ENCODE measurements at regions of chr4 and their contacts with region 1.

Region 1: GRCh38 chr4:54058171-54058570 is 6.2 kb downstream of the CHIC2 start:
- DNase-seq: peak in 2 of 9 experiments; percentile 20 to 49
- ATAC-seq: peak; percentile 44
- H3K4me3 ChIP-seq: no peak overlapping the region
- H3K4me3 Mint-ChIP-seq: peak overlapping the region; percentile 59
- H3K27ac ChIP-seq: no peak overlapping the region
- H3K27ac Mint-ChIP-seq: no peak overlapping the region
- H3K4me1 ChIP-seq: peaks cover 64% of the 10 kb centered on the region
- H3K4me1 Mint-ChIP-seq: peaks cover 81% of the 10 kb centered on the region
- H3K27me3 ChIP-seq: no peaks in the 10 kb centered on the region
- H3K27me3 Mint-ChIP-seq: no peaks in the 10 kb centered on the region
- CTCF ChIP-seq: no peak

Region 2: GRCh38 chr4:53371049-53371448 is 687.1 kb before region 1 on chr4:
- CTCF ChIA-PET with region 1: no interaction called
- POLR2A ChIA-PET with region 1: no interaction called
- intact Hi-C with region 1: loop called (anchors 2 to 5 kb)
- DNase-seq: no peak
- ATAC-seq: no peak
- H3K4me3 ChIP-seq: no peak overlapping the region
- H3K4me3 Mint-ChIP-seq: no peak overlapping the region
- H3K27ac ChIP-seq: no peak overlapping the region
- H3K27ac Mint-ChIP-seq: no peak overlapping the region
- H3K4me1 ChIP-seq: peaks cover 7% of the 10 kb centered on the region
- H3K4me1 Mint-ChIP-seq: peaks cover 12% of the 10 kb centered on the region
- H3K27me3 ChIP-seq: peaks cover 0 to 9% of the 10 kb centered on the region in 2 experiments
- H3K27me3 Mint-ChIP-seq: peaks cover 21% of the 10 kb centered on the region
- CTCF ChIP-seq: no peak

Region 3: GRCh38 chr4:54001668-54002572 is 56.3 kb before region 1 on chr4:
- CTCF ChIA-PET with region 1: no interaction called
- POLR2A ChIA-PET with region 1: no interaction called
- intact Hi-C with region 1: loop called in 1 of 2 experiments (anchors 5 kb)
- DNase-seq: no peak
- ATAC-seq: no peak
- H3K4me3 ChIP-seq: no peak overlapping the region
- H3K4me3 Mint-ChIP-seq: no peak overlapping the region
- H3K27ac ChIP-seq: no peak overlapping the region
- H3K27ac Mint-ChIP-seq: no peak overlapping the region
- H3K4me1 ChIP-seq: no peaks in the 10 kb centered on the region
- H3K4me1 Mint-ChIP-seq: peaks cover 3% of the 10 kb centered on the region
- H3K27me3 ChIP-seq: no peaks in the 10 kb centered on the region
- H3K27me3 Mint-ChIP-seq: no peaks in the 10 kb centered on the region
- CTCF ChIP-seq: no peak

Region 4: DNA sequence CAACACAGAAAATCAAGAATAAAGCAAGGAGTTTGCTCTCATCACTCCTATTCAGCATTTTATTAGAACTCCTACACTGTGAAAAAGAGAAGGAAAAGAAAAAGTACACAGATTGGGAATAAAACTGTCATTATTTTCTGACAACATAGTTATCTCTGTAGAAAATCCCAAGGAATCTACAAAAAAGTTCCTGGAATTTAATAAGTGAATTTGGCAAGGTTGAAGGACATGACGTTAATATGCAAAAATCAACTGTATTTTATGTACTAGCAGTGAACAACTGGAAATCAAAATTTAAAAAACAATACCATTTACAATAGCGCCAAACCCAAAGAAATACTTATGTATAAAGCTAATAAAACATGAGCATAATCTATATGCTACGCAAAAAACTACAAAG is 20.1 kb before region 1 on chr4:
- CTCF ChIA-PET with region 1: no interaction called
- POLR2A ChIA-PET with region 1: interaction called, 4 read pairs
- intact Hi-C with region 1: loop called in 1 of 2 experiments (anchors 2 kb)
- DNase-seq: no peak
- ATAC-seq: no peak
- H3K4me3 ChIP-seq: no peak overlapping the region
- H3K4me3 Mint-ChIP-seq: no peak overlapping the region
- H3K27ac ChIP-seq: no peak overlapping the region
- H3K27ac Mint-ChIP-seq: no peak overlapping the region
- H3K4me1 ChIP-seq: peaks cover 11% of the 10 kb centered on the region
- H3K4me1 Mint-ChIP-seq: peaks cover 61% of the 10 kb centered on the region
- H3K27me3 ChIP-seq: no peaks in the 10 kb centered on the region
- H3K27me3 Mint-ChIP-seq: no peaks in the 10 kb centered on the region
- CTCF ChIP-seq: no peak

Measured in CD8-positive, alpha-beta T cell (primary cell).